H1 (cell line): ENCODE measurements at regions of chr1 and their contacts with region 1.

Region 1: GRCh38 chr1:172429331-172430127 is 9.0 kb downstream of the C1orf105 start:
- DNase-seq: no peak
- H3K4me3 ChIP-seq: no peak overlapping the region
- H3K27ac ChIP-seq: no peak overlapping the region
- H3K4me1 ChIP-seq: peaks cover 3 to 5% (median 4%) of the 10 kb centered on the region in 4 experiments; a peak in 6 of 7 replicates
- H3K27me3 ChIP-seq: no peaks in the 10 kb centered on the region
- CTCF ChIP-seq: peak in 2 of 3 experiments; percentile 78 to 92; a peak in 3 of 4 replicates
- EP300 ChIP-seq: no peak
- POLR2A ChIP-seq: no peak
- RAD21 ChIP-seq: peak; percentile 83 to 85

Region 2: GRCh38 chr1:172089768-172090510 is 339.6 kb before region 1 on chr1:
- CTCF ChIA-PET with region 1: interaction called, 11 read pairs
- POLR2A ChIA-PET with region 1: no interaction called
- DNase-seq: peak; percentile 57 to 61
- H3K4me3 ChIP-seq: no peak overlapping the region
- H3K27ac ChIP-seq: no peak overlapping the region
- H3K4me1 ChIP-seq: peaks cover 0 to 5% (median 0%) of the 10 kb centered on the region in 4 experiments; a peak in 1 of 7 replicates
- H3K27me3 ChIP-seq: no peaks in the 10 kb centered on the region
- CTCF ChIP-seq: peak; percentile 87 to 96 (median 93)
- EP300 ChIP-seq: no peak
- POLR2A ChIP-seq: no peak
- RAD21 ChIP-seq: peak; percentile 92 to 94

Region 3: DNA sequence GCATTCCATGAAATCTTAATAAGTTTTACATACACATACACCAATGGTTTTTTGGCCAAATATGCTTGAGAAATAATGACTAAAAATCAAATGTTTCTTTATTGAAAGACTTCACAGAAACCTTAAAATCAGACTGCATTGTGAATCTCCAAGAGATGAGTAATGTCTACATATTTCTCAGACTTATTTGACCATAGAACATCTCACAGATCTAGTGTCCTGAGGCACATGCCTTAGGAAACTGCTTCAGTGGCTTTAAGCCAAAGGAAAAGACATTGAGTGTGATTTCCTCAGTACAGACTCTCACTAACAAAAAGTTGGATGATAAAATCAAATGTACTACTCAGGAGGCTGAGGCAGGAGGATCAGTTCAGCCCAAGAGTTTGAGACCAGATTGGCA is 15.2 kb before region 1 on chr1:
- CTCF ChIA-PET with region 1: interaction called, 20 read pairs
- POLR2A ChIA-PET with region 1: no interaction called
- DNase-seq: no peak
- H3K4me3 ChIP-seq: no peak overlapping the region
- H3K27ac ChIP-seq: no peak overlapping the region
- H3K4me1 ChIP-seq: peaks cover 0 to 4% (median 0%) of the 10 kb centered on the region in 4 experiments; a peak in 1 of 7 replicates
- H3K27me3 ChIP-seq: no peaks in the 10 kb centered on the region
- CTCF ChIP-seq: no peak
- EP300 ChIP-seq: no peak
- POLR2A ChIP-seq: no peak
- RAD21 ChIP-seq: no peak

Region 4: DNA sequence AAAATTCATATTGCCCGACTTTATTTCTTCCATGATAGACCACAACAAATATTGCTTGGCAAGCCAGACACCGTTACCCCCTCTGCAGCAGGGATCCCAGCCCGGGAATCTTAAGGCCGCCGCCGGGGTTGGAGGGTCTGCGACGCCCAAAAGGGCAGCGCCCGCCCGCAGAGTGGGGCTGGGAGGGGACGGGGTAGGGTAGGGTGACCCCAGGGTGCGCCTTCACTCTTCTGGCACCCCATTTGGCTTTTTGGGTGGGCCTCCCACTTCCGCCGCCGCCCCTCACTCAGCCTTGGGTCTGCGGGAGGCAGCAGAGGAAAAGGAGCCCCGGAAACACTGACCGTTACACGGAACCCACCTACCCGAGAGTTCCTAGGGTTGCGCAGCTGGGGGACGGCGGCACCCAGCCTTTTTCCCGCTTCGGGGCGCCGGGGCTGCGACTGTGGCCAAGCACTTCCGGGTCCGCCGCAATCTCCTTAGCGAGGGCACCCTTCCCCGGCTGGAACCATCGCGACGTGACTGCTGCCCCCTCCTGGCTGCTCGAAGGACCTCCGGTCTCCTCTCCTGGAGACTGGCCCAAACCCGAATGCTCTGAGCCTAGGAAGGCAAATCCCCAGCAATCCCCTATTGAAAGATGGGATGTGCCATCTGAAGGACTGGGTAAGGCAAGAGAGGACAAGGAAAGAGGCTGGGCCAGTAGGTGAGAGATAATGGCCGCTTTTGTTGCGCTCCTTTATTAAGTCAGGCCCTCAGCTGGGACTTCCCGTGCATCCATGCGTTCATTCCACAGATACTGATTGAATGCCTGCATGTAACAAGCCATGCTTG is 14.3 kb after region 1 on chr1 and contains the start of gene PIGC:
- CTCF ChIA-PET with region 1: interaction called, 10 read pairs
- POLR2A ChIA-PET with region 1: no interaction called
- DNase-seq: peak; percentile 77 to 94
- H3K4me3 ChIP-seq: peak within 1 kb of the TSS; percentile 53 to 92 (median 90)
- H3K27ac ChIP-seq: peak within 1 kb of the TSS; percentile 78; the same call in 1 of the 2 replicates
- H3K4me1 ChIP-seq: no peaks in the 10 kb centered on the region
- H3K27me3 ChIP-seq: no peaks in the 10 kb centered on the region
- CTCF ChIP-seq: peak; percentile 91 to 97 (median 93)
- EP300 ChIP-seq: peak in 1 of 2 experiments; percentile 61; a peak in 1 of 3 replicates
- POLR2A ChIP-seq: peak in 1 of 2 experiments; percentile 89; a peak in 2 of 3 replicates
- RAD21 ChIP-seq: peak; percentile 71 to 83
- total RNA-seq, gene PIGC: 20.8 and 21.0 TPM in 2 replicates

Region 5: GRCh38 chr1:172515927-172516326 is 86.4 kb after region 1 on chr1:
- CTCF ChIA-PET with region 1: no interaction called
- POLR2A ChIA-PET with region 1: no interaction called
- DNase-seq: no peak
- H3K4me3 ChIP-seq: no peak overlapping the region
- H3K27ac ChIP-seq: no peak overlapping the region
- H3K4me1 ChIP-seq: no peaks in the 10 kb centered on the region
- H3K27me3 ChIP-seq: no peaks in the 10 kb centered on the region
- CTCF ChIP-seq: no peak
- EP300 ChIP-seq: no peak
- POLR2A ChIP-seq: no peak
- RAD21 ChIP-seq: no peak

Region 6: DNA sequence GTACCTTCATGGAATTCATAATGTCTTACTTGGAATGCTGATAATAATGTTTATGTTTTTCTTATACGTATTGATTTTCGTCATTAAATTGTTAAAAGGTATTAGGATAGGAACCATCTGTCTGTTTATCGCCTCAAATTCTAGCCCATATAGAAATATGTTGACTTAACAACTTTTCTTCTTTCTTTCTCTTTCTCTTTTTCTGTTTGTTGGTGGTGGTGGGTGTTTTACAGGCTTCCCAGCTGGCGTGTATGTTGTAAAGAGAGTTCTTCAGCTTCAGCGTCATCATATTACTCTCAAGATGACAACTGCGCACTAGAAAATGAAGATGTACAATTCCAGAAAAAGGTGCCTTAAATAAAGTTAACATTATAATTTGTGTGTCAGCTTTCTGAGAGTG is 121.8 kb after region 1 on chr1:
- CTCF ChIA-PET with region 1: no interaction called
- POLR2A ChIA-PET with region 1: no interaction called
- DNase-seq: no peak
- H3K4me3 ChIP-seq: no peak overlapping the region
- H3K27ac ChIP-seq: no peak overlapping the region
- H3K4me1 ChIP-seq: peaks cover 0 to 12% (median 0%) of the 10 kb centered on the region in 4 experiments; a peak in 1 of 7 replicates
- H3K27me3 ChIP-seq: no peaks in the 10 kb centered on the region
- CTCF ChIP-seq: no peak
- EP300 ChIP-seq: no peak
- POLR2A ChIP-seq: no peak
- RAD21 ChIP-seq: no peak